ENCODE measurements at regions of chr9 and their contacts with region 1.

Region 1: DNA sequence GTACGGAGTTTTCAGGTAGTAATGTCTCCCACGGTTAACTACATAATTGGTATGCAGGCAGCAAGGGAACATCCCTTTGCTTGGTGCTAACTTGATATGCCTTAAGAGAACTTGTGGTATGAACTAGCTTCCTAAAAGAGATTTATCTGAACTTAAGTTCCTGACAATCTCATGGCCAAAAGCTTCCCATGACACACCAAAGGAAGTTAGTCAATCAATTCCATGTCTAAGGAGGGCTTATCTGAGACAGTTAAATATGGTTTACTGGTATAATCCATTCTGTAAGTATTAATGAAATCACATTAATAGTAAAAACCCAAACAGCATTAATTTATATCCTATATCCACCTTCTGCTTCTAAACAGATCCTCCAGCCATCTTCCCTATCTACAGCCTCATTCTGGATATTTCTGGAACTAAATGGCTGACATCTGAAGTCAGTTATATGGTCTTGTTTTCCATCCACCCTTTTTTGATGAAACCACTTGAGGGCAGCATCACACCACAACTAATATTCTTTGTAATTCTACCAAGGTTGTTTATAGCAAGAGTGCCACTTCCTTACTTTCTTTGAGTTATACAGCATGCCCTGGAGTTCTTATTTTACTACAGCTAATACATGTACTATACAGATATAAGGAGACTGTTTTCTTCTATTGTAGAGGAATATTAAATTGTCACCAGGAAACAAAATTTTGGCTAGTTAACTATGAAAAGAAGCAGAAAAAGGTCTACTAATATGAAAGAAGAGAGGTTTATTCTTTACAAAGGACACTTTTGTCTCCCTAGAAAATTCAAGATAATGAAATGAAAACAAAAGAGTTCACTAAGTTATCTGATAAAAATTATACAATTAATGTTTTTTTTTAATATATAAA is 34.7 kb downstream of the SHOC1 start:
- DNase-seq: peak; percentile 10 to 24
- H3K4me3 ChIP-seq: no peak overlapping the region
- H3K27ac ChIP-seq: no peak overlapping the region
- H3K4me1 ChIP-seq: no peaks in the 10 kb centered on the region
- H3K27me3 ChIP-seq: no peaks in the 10 kb centered on the region
- CTCF ChIP-seq: peak in 5 of 6 experiments; percentile 30 to 66 (median 58)
- POLR2A ChIP-seq: no peak

Region 2: GRCh38 chr9:111597817-111598729 is 161.9 kb before region 1 on chr9:
- intact Hi-C with region 1: no loop called
- DNase-seq: peak; percentile 77 to 85
- H3K4me3 ChIP-seq: peak overlapping the region; percentile 16 to 68 (median 47)
- H3K27ac ChIP-seq: peak overlapping the region; percentile 59 to 89 (median 75)
- H3K4me1 ChIP-seq: peaks cover 0 to 8% of the 10 kb centered on the region in 2 donors
- H3K27me3 ChIP-seq: no peaks in the 10 kb centered on the region
- CTCF ChIP-seq: peak; percentile 36 to 94 (median 65)
- POLR2A ChIP-seq: no peak

Region 3: GRCh38 chr9:111712369-111712768 is 47.6 kb before region 1 on chr9:
- intact Hi-C with region 1: no loop called
- DNase-seq: no peak
- H3K4me3 ChIP-seq: no peak overlapping the region
- H3K27ac ChIP-seq: no peak overlapping the region
- H3K4me1 ChIP-seq: no peaks in the 10 kb centered on the region
- H3K27me3 ChIP-seq: no peaks in the 10 kb centered on the region
- CTCF ChIP-seq: no peak
- POLR2A ChIP-seq: no peak

Region 4: DNA sequence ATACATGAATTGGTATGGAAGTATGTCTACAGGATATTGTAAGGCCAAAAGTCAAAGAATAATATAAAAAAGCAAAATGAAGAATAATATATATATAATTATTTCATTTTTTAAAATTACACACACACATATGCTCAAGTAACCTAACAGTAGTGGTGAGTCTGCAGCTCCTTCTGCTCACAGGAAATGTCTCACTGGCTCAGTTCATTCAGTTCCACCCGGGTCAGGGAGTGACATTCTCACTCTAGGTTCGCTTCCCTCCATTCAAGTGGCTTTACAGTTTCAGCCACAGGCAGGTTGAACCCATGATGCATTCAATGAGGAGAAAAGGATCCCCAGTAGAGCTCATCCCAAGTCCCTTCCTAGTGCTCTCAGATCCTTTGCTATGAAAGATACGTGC is 324.3 kb after region 1 on chr9:
- intact Hi-C with region 1: loop called (anchors 5 kb)
- DNase-seq: no peak
- H3K4me3 ChIP-seq: no peak overlapping the region
- H3K27ac ChIP-seq: no peak overlapping the region
- H3K4me1 ChIP-seq: no peaks in the 10 kb centered on the region
- H3K27me3 ChIP-seq: no peaks in the 10 kb centered on the region
- CTCF ChIP-seq: no peak
- POLR2A ChIP-seq: no peak